Caco-2 (cell line): ENCODE measurements at regions of chr4 and their contacts with region 1.

Region 1: DNA sequence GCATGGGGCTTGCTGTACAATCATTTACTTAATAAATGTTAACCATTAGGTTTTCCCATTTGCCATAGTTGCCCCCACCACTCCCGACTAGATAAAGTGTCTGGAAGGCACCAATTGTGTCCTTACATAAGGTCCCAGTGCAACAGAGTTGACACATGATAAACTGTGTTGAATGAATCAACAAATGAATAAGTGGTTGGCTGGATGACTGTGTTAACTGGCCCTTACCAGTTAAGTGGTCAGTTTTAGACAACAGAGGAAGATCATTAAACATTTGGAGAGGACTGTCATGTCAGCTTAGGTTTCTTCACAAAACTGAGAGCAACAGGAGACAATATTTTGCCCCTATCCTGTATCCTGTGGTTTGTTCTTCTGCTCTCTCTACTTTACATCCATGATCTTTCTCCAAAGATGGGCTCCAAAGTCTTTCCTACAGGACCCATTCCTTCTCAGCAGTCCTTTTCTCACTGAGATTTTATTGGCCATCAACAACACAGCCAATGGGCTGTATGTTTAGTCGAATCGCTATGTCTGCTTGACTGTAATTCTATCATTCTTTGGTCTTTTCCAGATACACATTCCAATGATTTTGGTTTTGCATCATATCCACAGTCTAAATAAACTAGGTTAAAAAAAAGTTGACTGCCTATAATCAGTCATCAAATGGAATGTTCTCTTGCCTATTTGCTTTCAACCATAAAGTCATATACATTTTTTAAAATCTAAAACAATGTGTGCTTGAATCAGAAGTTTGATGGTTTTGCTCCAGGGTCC is 74.3 kb downstream of the RNF150 start:
- DNase-seq: no peak
- H3K4me3 ChIP-seq: no peak overlapping the region
- H3K4me3 Mint-ChIP-seq: no peak overlapping the region
- H3K27ac Mint-ChIP-seq: no peak overlapping the region
- H3K4me1 ChIP-seq: no peaks in the 10 kb centered on the region
- H3K4me1 Mint-ChIP-seq: no peaks in the 10 kb centered on the region
- H3K27me3 ChIP-seq: no peaks in the 10 kb centered on the region
- H3K27me3 Mint-ChIP-seq: peaks cover 2% of the 10 kb centered on the region
- CTCF ChIP-seq: no peak

Region 2: GRCh38 chr4:141081921-141082395 is 23.0 kb after region 1 on chr4:
- CTCF ChIA-PET with region 1: no interaction called
- POLR2A ChIA-PET with region 1: no interaction called
- intact Hi-C with region 1: loop called (anchors 1 kb)
- DNase-seq: no peak
- H3K4me3 ChIP-seq: no peak overlapping the region
- H3K4me3 Mint-ChIP-seq: no peak overlapping the region
- H3K27ac Mint-ChIP-seq: no peak overlapping the region
- H3K4me1 ChIP-seq: no peaks in the 10 kb centered on the region
- H3K4me1 Mint-ChIP-seq: no peaks in the 10 kb centered on the region
- H3K27me3 ChIP-seq: no peaks in the 10 kb centered on the region
- H3K27me3 Mint-ChIP-seq: peaks cover 5% of the 10 kb centered on the region
- CTCF ChIP-seq: no peak